Motor neuron (in vitro differentiated cells): ENCODE measurements at regions of chr6 and their contacts with region 1.

Region 1: GRCh38 chr6:41683510-41684310 is 45.4 kb downstream of the MDFI start:
- ATAC-seq: peak; percentile 67 to 84 (median 74)
- H3K4me3 ChIP-seq: no peak overlapping the region
- H3K27ac ChIP-seq: no peak overlapping the region
- H3K4me1 ChIP-seq: peaks cover 23 to 25% of the 10 kb centered on the region in 2 donors

Region 2: DNA sequence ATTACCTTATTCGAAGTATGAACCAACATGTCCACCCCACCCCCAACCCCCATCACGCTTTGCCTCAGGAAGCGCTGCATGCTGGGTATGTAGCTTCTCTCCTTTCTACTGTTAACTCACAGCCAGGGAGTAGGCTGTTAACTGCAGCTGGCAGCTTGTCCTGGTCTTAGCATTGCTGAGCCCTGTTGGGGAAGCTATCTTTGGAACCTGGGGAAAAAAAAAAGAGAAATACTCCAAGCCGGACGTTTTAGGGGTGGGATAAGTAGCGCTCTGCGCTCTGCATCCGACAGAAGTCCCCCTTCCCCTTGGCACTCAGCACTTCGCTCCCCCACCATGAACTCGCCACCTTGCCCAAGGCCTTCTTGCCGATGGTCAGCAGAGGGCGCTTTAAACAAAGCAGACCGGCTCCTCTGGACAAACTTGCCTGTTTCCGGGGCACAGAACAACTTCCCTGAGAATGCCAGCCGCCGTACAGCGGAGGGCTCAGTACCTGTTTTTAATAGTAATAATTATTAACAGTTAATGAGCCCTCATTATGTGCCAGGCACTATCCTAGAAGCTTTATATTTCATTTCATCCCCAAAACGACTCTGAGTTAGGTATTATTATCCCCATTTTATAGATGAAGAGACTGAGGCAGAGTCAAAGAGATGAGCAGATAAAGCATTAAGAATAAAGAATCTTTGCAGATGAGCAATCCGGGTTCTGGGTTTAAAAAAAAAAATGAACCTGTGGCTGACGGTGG is 80.7 kb before region 1 on chr6:
- in situ Hi-C with region 1: loop called in 2 of 9 experiments (anchors 10 kb)
- ATAC-seq: peak; percentile 69 to 94 (median 78)
- H3K4me3 ChIP-seq: no peak overlapping the region
- H3K27ac ChIP-seq: no peak overlapping the region
- H3K4me1 ChIP-seq: peaks cover 14 to 29% of the 10 kb centered on the region in 2 donors